Common myeloid progenitor, CD34-positive (primary cell): ENCODE measurements at regions of chr2 and their contacts with region 1.

Region 1: GRCh38 chr2:218269899-218270720 is at the starts of genes AAMP and PNKD:
- DNase-seq: peak; percentile 99 to 100 (median 99)
- H3K4me3 ChIP-seq: peak within 1 kb of the TSS; percentile 71 to 98 (median 95)
- H3K27ac ChIP-seq: peak within 1 kb of the TSS; percentile 83 to 88
- H3K4me1 ChIP-seq: peaks cover 5 to 36% (median 26%) of the 10 kb centered on the region in 4 experiments
- H3K27me3 ChIP-seq: no peaks in the 10 kb centered on the region

Region 2: GRCh38 chr2:218257390-218257981 is 12.6 kb before region 1 on chr2:
- CTCF ChIA-PET with region 1: interaction called, 37 read pairs
- POLR2A ChIA-PET with region 1: interaction called, 3 read pairs
- DNase-seq: peak; percentile 77 to 89 (median 87)
- H3K4me3 ChIP-seq: peak overlapping the region in 4 of 7 experiments; percentile 27 to 64 (median 49)
- H3K27ac ChIP-seq: peak overlapping the region in 1 of 2 experiments; percentile 38
- H3K4me1 ChIP-seq: peaks cover 0 to 21% (median 18%) of the 10 kb centered on the region in 4 experiments
- H3K27me3 ChIP-seq: no peaks in the 10 kb centered on the region

Region 3: DNA sequence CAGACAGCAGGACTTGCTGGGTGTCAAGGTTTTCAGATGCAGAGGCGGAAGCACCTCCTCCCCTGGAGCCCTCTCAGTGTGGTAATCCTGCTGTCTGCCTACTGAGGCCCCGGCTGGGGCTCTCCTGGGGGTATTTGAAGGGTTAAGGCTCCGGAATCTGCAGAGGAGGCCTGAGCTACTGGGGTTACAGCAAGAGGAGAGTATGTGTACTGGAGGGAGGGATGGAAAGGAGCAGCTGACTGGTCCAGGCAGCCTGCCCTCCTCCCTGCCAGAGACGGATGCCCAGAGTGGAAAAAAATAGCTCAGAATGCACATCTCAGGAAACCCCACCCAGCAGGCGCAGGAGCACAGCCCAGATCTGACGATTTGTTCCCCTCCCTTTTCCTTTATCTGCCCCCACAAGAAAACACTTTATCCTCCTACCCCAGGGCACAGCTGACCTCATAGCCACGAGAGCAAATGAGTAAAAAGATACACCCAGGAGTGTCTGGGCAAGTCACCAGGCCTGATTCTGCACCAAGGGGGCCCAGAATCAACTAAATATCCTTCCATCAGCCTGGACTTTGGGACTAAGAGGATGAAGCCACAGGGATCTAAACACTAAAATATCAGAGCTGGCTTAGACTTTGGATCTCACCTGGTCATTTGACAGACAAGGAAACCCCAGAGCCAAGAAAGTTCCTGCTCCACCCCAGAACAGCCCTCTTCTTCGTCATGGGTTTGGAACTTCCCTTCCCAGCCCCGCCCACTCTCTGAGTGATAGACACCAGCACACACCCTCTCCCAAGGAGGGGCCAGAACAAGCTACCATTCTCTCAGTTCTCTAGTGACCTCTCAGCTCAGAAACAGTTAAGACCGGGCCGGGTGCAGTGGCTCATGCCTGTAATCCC is 16.7 kb after region 1 on chr2:
- CTCF ChIA-PET with region 1: interaction called, 383 read pairs
- POLR2A ChIA-PET with region 1: interaction called, 20 read pairs
- DNase-seq: peak; percentile 88 to 94 (median 92)
- H3K4me3 ChIP-seq: peak overlapping the region in 6 of 7 experiments; percentile 2 to 68 (median 53)
- H3K27ac ChIP-seq: peak overlapping the region; percentile 89 to 91
- H3K4me1 ChIP-seq: peaks cover 26 to 77% (median 71%) of the 10 kb centered on the region in 4 experiments
- H3K27me3 ChIP-seq: no peaks in the 10 kb centered on the region

Region 4: DNA sequence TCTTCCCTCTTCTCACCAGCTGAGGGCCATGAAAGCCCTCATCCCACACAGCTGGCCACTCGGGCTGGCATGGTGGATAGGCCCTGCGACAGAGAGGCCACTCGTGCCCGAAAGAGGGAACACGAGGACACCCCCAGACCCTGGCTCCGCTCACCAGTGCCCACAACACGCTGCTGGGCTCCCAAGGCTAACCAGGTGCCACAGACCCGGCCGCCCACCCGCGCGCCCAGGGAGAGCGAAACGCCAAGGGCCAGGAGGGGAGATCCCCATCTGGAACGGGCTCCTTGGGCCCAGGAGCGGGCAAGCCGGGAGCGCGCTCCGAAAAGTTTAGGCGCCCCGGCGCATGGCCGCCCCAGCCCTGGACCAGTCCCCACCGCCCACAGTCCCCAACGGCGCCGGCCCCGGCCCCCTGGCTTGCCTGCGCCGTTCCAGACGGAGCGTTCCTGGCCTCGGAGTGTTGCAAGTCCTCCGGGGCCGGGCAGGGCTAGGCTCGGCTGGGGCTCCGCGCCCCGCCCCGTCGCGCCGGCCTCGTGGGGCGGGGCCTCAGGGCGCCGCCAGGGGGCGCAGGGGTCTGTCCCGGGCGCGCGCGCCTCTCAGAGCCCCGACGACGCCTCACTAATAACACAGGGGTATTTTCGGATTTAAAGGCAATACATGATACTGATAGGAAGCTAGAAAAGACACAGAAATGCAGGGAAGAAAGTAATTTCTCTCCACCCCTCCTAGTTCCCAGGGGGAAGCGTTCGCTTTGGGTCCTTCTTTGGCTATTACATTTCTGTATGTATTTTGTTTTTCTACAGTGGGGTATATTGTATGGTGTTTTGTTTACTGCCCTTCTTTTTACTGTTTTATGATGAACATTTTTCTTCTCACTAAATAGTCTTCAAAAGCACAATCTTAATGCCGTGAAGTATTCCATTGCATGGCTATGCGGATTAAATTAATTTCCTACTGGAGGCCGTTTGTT is 22.2 kb after region 1 on chr2 and contains the start of gene TMBIM1:
- CTCF ChIA-PET with region 1: interaction called, 383 read pairs
- POLR2A ChIA-PET with region 1: interaction called, 20 read pairs
- DNase-seq: peak; percentile 61 to 82 (median 82)
- H3K4me3 ChIP-seq: peak within 1 kb of the TSS; percentile 62 to 93 (median 80)
- H3K27ac ChIP-seq: peak within 1 kb of the TSS; percentile 66 to 90
- H3K4me1 ChIP-seq: peaks cover 15 to 67% (median 59%) of the 10 kb centered on the region in 4 experiments
- H3K27me3 ChIP-seq: no peaks in the 10 kb centered on the region

Region 5: DNA sequence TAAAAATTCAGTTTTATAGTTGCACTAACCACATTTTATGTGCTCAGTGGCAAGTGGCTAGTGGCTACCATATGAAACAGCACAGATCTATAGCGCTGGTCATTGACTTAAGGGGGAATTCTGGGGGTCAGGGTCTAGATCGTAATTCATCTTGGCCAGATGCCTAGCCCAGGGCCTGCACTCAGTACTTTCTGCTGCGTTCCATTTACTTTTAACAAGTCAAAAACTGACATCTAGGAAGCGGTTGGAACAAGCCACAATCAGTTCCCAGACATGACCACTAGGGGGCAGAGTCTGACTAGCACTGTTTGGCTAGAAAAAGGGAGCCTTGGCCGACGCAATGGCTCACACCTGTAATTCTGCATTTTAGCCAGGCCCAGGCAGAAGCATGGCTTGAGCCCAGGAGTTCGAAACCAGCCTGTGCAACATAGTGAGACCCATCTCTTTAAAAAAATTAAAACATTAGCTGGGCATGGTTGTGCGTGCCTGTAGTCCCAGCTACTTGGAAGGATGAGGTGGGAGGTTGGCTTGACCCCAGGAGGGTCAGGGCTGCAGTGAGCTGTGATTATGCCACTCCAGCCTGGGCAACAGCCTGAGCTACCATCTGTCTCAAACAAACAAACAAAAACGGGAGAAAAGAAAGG is 31.2 kb after region 1 on chr2:
- CTCF ChIA-PET with region 1: interaction called, 383 read pairs
- POLR2A ChIA-PET with region 1: no interaction called
- DNase-seq: peak; percentile 91 to 96 (median 93)
- H3K4me3 ChIP-seq: no peak overlapping the region
- H3K27ac ChIP-seq: peak overlapping the region in 1 of 2 experiments; percentile 65
- H3K4me1 ChIP-seq: peaks cover 0 to 10% (median 3%) of the 10 kb centered on the region in 4 experiments
- H3K27me3 ChIP-seq: no peaks in the 10 kb centered on the region

Region 6: GRCh38 chr2:218360447-218360846 is 90.3 kb after region 1 on chr2:
- CTCF ChIA-PET with region 1: interaction called, 82 read pairs
- POLR2A ChIA-PET with region 1: interaction called, 3 read pairs
- DNase-seq: peak in 2 of 3 donors; percentile 43 to 44
- H3K4me3 ChIP-seq: no peak overlapping the region
- H3K27ac ChIP-seq: no peak overlapping the region
- H3K4me1 ChIP-seq: peaks cover 0 to 17% (median 6%) of the 10 kb centered on the region in 4 experiments
- H3K27me3 ChIP-seq: no peaks in the 10 kb centered on the region

Region 7: GRCh38 chr2:218466016-218466521 is 196.0 kb after region 1 on chr2:
- CTCF ChIA-PET with region 1: interaction called, 18 read pairs
- POLR2A ChIA-PET with region 1: no interaction called
- DNase-seq: peak; percentile 18 to 37 (median 25)
- H3K4me3 ChIP-seq: no peak overlapping the region
- H3K27ac ChIP-seq: no peak overlapping the region
- H3K4me1 ChIP-seq: peaks cover 0 to 2% (median under 1%) of the 10 kb centered on the region in 4 experiments
- H3K27me3 ChIP-seq: no peaks in the 10 kb centered on the region